K562 (cell line): ENCODE measurements at regions of chr19 and their contacts with region 1.

Region 1: DNA sequence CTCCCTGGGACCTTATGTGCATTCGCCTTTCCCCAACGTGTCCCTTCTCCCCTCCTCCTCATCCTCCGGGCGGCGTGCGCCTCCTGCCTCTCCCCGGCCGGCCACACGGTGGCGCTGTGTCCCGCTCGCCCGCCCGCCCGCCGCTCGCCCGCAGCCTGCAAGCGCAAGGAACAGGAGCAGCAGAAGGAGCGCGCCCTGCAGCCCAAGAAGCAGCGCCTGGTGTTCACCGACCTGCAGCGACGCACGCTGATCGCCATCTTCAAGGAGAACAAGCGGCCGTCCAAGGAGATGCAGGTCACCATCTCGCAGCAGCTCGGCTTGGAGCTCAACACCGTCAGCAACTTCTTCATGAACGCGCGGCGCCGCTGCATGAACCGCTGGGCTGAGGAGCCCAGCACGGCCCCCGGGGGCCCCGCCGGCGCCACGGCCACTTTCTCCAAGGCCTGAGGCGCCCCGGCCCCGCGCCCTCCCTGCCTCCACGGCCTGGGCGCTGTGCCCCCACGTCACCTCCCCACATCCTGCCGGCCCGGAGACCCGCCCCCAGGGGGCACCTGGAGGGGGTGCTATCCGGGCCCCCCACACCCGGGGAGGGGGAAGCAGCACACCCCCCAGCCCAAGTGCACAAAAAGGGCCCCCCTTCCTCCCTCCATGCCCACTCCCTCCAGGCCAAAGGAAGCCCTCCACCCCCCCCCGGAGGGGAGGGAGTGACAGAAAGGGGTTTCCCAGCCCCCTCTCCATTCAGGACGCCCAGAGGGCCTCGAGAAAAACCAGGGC is 21.9 kb downstream of the ONECUT3 start:
- DNase-seq: peak; percentile 84 to 89 (median 86)
- ATAC-seq: peak; percentile 98
- H3K4me3 ChIP-seq: peak overlapping the region; percentile 25
- H3K27ac ChIP-seq: no peak overlapping the region
- H3K4me1 ChIP-seq: peaks cover 0 to 26% of the 10 kb centered on the region in 2 experiments; a peak in 3 of 5 replicates
- H3K27me3 ChIP-seq: peaks cover 0 to 19% of the 10 kb centered on the region in 2 experiments; a peak in 1 of 5 replicates
- CTCF ChIP-seq: peak; percentile 77 to 97 (median 90)
- EP300 ChIP-seq: no peak
- POLR2A ChIP-seq: no peak
- RAD21 ChIP-seq: peak; percentile 30 to 81; a peak in 3 of 4 replicates

Region 2: GRCh38 chr19:1747285-1748114 is 27.7 kb before region 1 on chr19:
- CTCF ChIA-PET with region 1: no interaction called
- POLR2A ChIA-PET with region 1: no interaction called
- in situ Hi-C with region 1: no loop called
- intact Hi-C with region 1: no loop called
- DNase-seq: peak; percentile 91 to 95 (median 92)
- ATAC-seq: peak; percentile 83
- H3K4me3 ChIP-seq: peak overlapping the region; percentile 40
- H3K27ac ChIP-seq: peak overlapping the region; percentile 90
- H3K4me1 ChIP-seq: peaks cover 24 to 73% of the 10 kb centered on the region in 2 experiments
- H3K27me3 ChIP-seq: peaks cover 0 to 1% of the 10 kb centered on the region in 2 experiments; a peak in 1 of 5 replicates
- CTCF ChIP-seq: no peak
- EP300 ChIP-seq: peak; percentile 10
- POLR2A ChIP-seq: peak; percentile 67; the same call in 1 of the 2 replicates
- RAD21 ChIP-seq: no peak

Region 3: DNA sequence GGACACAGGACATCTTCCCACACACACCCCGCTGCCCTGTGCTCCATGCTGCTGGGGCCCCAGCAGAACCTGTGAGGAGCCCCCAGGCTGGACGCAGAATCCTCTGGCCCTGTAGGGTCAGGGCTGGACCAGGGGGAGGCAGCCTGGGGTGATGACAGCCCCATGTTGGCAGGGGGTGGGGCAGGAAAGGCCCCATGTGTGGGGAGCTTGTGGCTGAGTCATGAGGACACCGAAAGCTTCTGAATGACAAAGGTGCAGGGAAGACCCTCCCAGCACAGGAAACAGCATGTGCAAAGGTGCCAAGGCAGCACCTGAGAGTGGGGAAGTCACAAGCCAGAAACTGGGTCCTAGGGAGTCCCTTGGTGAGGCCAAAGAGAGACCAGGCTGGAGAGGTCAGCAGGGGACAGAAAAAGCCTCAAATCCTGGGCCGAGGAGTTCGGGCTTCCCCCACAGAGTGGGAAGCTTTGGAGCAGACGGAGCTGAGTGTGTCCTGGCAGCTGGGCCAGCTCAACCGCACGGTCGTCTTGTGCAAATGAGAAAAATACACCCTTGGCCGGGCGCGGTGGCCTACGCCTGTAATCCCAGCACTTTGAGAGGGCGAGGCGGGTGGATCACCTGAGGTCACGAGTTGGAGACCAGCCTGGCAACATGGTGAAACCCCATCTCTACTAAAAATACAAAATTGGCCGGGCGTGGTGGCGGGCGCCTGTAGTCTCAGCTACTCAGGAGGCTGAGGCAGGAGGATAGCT is 19.4 kb after region 1 on chr19:
- CTCF ChIA-PET with region 1: interaction called, 7 read pairs
- POLR2A ChIA-PET with region 1: no interaction called
- in situ Hi-C with region 1: no loop called
- intact Hi-C with region 1: loop called (anchors 2 kb)
- DNase-seq: peak in 3 of 4 experiments; percentile 47 to 56 (median 51)
- ATAC-seq: no peak; the same call in 2 of the 3 replicates
- H3K4me3 ChIP-seq: no peak overlapping the region
- H3K27ac ChIP-seq: no peak overlapping the region
- H3K4me1 ChIP-seq: peaks cover 0 to 43% of the 10 kb centered on the region in 2 experiments; a peak in 3 of 5 replicates
- H3K27me3 ChIP-seq: no peaks in the 10 kb centered on the region
- CTCF ChIP-seq: no peak
- EP300 ChIP-seq: no peak
- POLR2A ChIP-seq: no peak
- RAD21 ChIP-seq: no peak

Region 4: DNA sequence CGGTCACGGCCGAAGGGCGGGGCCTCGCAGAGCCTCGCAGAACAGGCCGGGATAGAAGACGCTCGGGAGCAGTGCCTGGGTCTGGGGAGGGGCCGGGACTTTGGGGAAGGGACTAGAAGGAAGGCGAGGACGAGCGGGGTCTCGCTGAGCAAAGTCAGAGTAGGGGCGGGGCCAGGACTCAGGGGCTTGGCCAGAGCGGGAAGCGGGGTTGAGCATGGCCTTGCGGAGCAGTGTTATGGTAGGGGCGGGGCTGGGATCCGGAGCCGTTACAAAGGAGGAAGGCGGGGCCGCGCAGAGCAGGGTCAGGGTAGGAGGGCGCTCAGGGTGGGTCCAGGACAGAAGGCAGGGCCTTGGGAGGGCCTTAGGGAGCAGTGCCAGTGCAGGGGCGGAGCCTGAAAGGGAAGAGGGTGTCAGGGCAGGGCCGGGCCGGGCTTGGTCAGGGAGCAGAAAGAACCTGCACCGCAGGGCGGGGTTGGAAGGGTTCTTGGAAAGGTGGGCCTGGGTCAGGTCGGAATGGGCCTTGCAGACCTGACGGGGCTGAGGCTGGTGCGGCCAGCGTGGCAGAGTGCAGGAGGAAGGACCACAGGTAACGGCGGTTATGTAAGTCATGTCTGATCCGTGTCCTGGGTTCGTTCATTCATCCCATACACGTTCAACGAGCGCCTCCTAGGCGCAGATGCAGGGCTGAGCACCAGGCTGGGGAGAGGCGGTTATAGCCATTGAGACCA is 37.4 kb after region 1 on chr19:
- CTCF ChIA-PET with region 1: interaction called, 4 read pairs
- POLR2A ChIA-PET with region 1: no interaction called
- in situ Hi-C with region 1: no loop called
- intact Hi-C with region 1: loop called (anchors 1 kb)
- DNase-seq: peak; percentile 90 to 97 (median 92)
- ATAC-seq: peak; percentile 95
- H3K4me3 ChIP-seq: peak overlapping the region; percentile 75
- H3K27ac ChIP-seq: peak overlapping the region; percentile 92
- H3K4me1 ChIP-seq: peaks cover 8 to 73% of the 10 kb centered on the region in 2 experiments; a peak in 3 of 5 replicates
- H3K27me3 ChIP-seq: no peaks in the 10 kb centered on the region
- CTCF ChIP-seq: peak; percentile 84 to 94 (median 87)
- EP300 ChIP-seq: no peak
- POLR2A ChIP-seq: peak; percentile 83
- RAD21 ChIP-seq: peak; percentile 55 to 83